HepG2 (cell line): ENCODE measurements at regions of chr4 and their contacts with region 1.

Region 1: DNA sequence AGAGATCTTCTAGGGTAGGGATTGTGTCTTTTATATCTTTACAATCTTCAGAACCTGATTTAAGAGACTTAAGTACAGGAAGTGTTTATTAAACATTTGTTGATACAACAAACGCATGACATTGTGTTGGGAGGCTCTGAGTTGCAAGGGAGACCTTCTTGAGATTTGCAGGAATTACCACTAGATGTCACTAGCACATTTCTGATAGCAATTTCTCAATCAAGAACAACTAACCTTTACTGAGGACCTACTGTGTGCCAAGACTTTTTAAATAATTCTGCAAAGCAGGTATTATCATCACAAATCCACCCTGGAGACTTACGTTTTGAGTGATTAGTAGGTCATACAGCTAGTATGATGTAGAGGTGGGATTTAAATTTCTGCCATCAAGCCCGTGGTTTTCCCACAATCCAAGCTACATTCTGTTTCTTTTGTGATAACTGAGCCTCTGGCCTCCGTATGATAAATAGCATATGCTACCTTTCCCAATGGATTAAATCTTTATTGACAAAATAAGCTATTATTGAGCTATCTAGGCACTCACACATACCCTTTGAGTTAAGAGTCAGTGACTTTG is 986.0 kb downstream of the CCSER1 start:
- DNase-seq: peak; percentile 7
- ATAC-seq: no peak; the same call in 2 of the 3 replicates
- H3K4me3 ChIP-seq: no peak overlapping the region
- H3K27ac ChIP-seq: no peak overlapping the region
- H3K4me1 ChIP-seq: no peaks in the 10 kb centered on the region
- H3K27me3 ChIP-seq: no peaks in the 10 kb centered on the region
- CTCF ChIP-seq: peak; percentile 69
- EP300 ChIP-seq: no peak
- POLR2A ChIP-seq: no peak
- RAD21 ChIP-seq: 0 out of 2 replicates have a peak, but pooled peaks have one; percentile 19

Region 2: DNA sequence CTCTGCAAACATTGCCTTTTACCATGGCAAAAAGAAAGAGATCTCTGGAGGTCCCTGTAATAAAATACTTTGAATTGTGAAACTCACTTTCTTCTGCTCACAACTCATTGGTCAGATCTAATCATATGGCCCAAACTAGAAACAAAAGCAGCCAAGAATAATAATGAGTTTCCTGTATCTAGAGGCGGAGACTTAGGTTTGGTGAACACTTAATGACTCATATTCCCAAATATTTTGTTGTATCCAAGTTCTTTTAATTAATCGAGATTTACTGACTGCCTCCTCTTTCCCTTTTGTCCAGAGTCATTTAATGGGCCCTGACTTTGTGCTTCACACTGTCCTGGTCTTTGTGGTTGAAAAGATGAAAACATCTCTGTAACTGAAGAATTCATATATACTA is 795.4 kb before region 1 on chr4:
- CTCF ChIA-PET with region 1: no interaction called
- POLR2A ChIA-PET with region 1: no interaction called
- in situ Hi-C with region 1: no loop called
- intact Hi-C with region 1: loop called (anchors 5 kb)
- DNase-seq: no peak
- ATAC-seq: no peak
- H3K4me3 ChIP-seq: no peak overlapping the region
- H3K27ac ChIP-seq: no peak overlapping the region
- H3K4me1 ChIP-seq: no peaks in the 10 kb centered on the region
- H3K27me3 ChIP-seq: no peaks in the 10 kb centered on the region; a peak in 1 of 5 replicates
- CTCF ChIP-seq: no peak
- EP300 ChIP-seq: no peak
- POLR2A ChIP-seq: no peak
- RAD21 ChIP-seq: no peak

Region 3: GRCh38 chr4:90419124-90419711 is 694.0 kb before region 1 on chr4:
- CTCF ChIA-PET with region 1: no interaction called
- POLR2A ChIA-PET with region 1: no interaction called
- in situ Hi-C with region 1: no loop called
- intact Hi-C with region 1: loop called (anchors 1 kb)
- DNase-seq: peak; percentile 16
- ATAC-seq: peak; percentile 71
- H3K4me3 ChIP-seq: no peak overlapping the region
- H3K27ac ChIP-seq: no peak overlapping the region
- H3K4me1 ChIP-seq: no peaks in the 10 kb centered on the region
- H3K27me3 ChIP-seq: no peaks in the 10 kb centered on the region
- CTCF ChIP-seq: peak; percentile 65
- EP300 ChIP-seq: no peak
- POLR2A ChIP-seq: no peak
- RAD21 ChIP-seq: no peak

Region 4: GRCh38 chr4:90780193-90780592 is 333.0 kb before region 1 on chr4:
- CTCF ChIA-PET with region 1: no interaction called
- POLR2A ChIA-PET with region 1: no interaction called
- in situ Hi-C with region 1: no loop called
- intact Hi-C with region 1: loop called (anchors 5 kb)
- DNase-seq: no peak
- ATAC-seq: no peak
- H3K4me3 ChIP-seq: no peak overlapping the region
- H3K27ac ChIP-seq: no peak overlapping the region
- H3K4me1 ChIP-seq: no peaks in the 10 kb centered on the region
- H3K27me3 ChIP-seq: no peaks in the 10 kb centered on the region
- CTCF ChIP-seq: no peak
- EP300 ChIP-seq: no peak
- POLR2A ChIP-seq: no peak
- RAD21 ChIP-seq: no peak

Region 5: DNA sequence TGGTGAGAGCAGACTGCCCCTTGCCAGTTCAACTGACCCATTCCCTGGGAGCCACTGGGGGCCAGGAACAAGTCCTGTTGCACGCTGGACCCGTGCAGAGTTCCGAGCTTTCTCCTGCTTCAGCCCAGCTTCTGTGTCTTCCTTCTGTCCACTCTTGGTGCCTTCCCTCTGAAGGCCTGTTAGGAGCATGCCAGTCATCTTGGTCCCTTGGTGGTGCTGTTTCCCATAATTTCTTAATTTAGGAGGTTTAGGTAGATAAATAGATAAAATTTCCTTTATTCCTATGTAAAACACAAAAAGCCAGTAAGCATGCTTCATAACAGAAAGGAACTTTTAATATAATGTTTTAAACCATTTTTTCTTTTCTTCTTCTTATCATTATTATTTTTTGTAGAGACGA is 313.3 kb before region 1 on chr4:
- CTCF ChIA-PET with region 1: no interaction called
- POLR2A ChIA-PET with region 1: no interaction called
- in situ Hi-C with region 1: no loop called
- intact Hi-C with region 1: loop called (anchors 1 kb)
- DNase-seq: no peak
- ATAC-seq: peak; percentile 47; the same call in 2 of the 3 replicates
- H3K4me3 ChIP-seq: no peak overlapping the region
- H3K27ac ChIP-seq: no peak overlapping the region
- H3K4me1 ChIP-seq: no peaks in the 10 kb centered on the region
- H3K27me3 ChIP-seq: no peaks in the 10 kb centered on the region; a peak in 1 of 5 replicates
- CTCF ChIP-seq: peak; percentile 36
- EP300 ChIP-seq: no peak
- POLR2A ChIP-seq: no peak
- RAD21 ChIP-seq: no peak

Region 6: DNA sequence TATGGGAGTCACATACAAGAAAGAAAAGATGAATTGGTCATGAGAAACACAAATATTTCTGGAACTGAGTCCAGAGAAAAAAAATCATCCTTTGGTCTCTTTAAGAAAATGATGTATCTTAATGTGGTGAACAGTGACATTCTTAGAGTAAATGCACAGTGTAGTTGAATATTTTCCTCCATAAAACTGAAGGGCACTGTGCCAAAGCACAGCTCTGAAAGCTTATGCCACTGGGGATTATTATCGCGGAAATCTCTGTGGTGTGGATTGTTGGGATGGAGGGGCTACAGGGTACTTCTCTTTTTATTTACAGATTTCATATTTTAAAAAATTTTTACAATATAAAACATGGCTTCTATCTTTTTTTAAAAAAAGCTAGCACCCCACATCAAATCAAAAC is 77.9 kb before region 1 on chr4:
- CTCF ChIA-PET with region 1: no interaction called
- POLR2A ChIA-PET with region 1: no interaction called
- in situ Hi-C with region 1: no loop called
- intact Hi-C with region 1: no loop called
- DNase-seq: no peak
- ATAC-seq: no peak
- H3K4me3 ChIP-seq: no peak overlapping the region
- H3K27ac ChIP-seq: no peak overlapping the region
- H3K4me1 ChIP-seq: no peaks in the 10 kb centered on the region
- H3K27me3 ChIP-seq: no peaks in the 10 kb centered on the region
- CTCF ChIP-seq: no peak
- EP300 ChIP-seq: no peak
- POLR2A ChIP-seq: no peak
- RAD21 ChIP-seq: no peak

Region 7: GRCh38 chr4:91092398-91093090 is 20.7 kb before region 1 on chr4:
- CTCF ChIA-PET with region 1: no interaction called
- POLR2A ChIA-PET with region 1: no interaction called
- in situ Hi-C with region 1: no loop called
- intact Hi-C with region 1: no loop called
- DNase-seq: no peak
- ATAC-seq: no peak
- H3K4me3 ChIP-seq: no peak overlapping the region
- H3K27ac ChIP-seq: no peak overlapping the region
- H3K4me1 ChIP-seq: no peaks in the 10 kb centered on the region
- H3K27me3 ChIP-seq: no peaks in the 10 kb centered on the region; a peak in 1 of 5 replicates
- CTCF ChIP-seq: no peak
- EP300 ChIP-seq: no peak
- POLR2A ChIP-seq: no peak
- RAD21 ChIP-seq: no peak

Region 8: DNA sequence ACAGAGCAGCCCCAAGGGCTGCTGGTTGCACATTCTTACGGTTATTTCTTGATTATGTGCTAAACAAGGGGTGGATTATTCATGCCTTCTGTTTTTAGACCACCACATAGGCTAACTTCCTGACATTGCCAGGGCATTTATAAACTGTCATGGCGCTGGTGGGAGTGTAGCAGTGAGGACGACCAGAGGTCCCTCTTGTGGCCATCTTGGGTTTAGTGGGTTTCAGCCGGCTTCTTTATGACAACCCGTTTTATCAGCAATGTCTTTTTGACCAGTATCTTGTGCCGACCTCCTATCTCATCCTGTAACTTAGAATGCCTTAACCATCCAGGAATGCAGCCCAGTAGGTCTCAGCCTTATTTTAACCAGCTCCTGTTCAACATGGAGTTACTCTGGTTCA is 978.1 kb after region 1 on chr4:
- CTCF ChIA-PET with region 1: no interaction called
- POLR2A ChIA-PET with region 1: no interaction called
- in situ Hi-C with region 1: no loop called
- intact Hi-C with region 1: loop called (anchors 5 kb)
- DNase-seq: peak; percentile 21
- ATAC-seq: peak; percentile 87
- H3K4me3 ChIP-seq: peak overlapping the region; percentile 12 to 41 (median 16); a peak in 4 of 6 replicates
- H3K27ac ChIP-seq: no peak overlapping the region
- H3K4me1 ChIP-seq: no peaks in the 10 kb centered on the region
- H3K27me3 ChIP-seq: 0 out of 5 replicates have a peak, but pooled peaks cover 0 to 1% of the 10 kb centered on the region in 2 experiments
- CTCF ChIP-seq: peak; percentile 32; the same call in 1 of the 2 replicates
- EP300 ChIP-seq: no peak
- POLR2A ChIP-seq: no peak
- RAD21 ChIP-seq: peak; percentile 40; the same call in 1 of the 2 replicates

Region 9: GRCh38 chr4:92387459-92388069 is 1274.3 kb after region 1 on chr4:
- CTCF ChIA-PET with region 1: interaction called, 4 read pairs
- POLR2A ChIA-PET with region 1: no interaction called
- in situ Hi-C with region 1: loop called (anchors 25 kb)
- intact Hi-C with region 1: no loop called
- DNase-seq: peak; percentile 30
- ATAC-seq: peak; percentile 80
- H3K4me3 ChIP-seq: no peak overlapping the region
- H3K27ac ChIP-seq: no peak overlapping the region
- H3K4me1 ChIP-seq: no peaks in the 10 kb centered on the region
- H3K27me3 ChIP-seq: no peaks in the 10 kb centered on the region
- CTCF ChIP-seq: peak; percentile 57
- EP300 ChIP-seq: no peak
- POLR2A ChIP-seq: no peak
- RAD21 ChIP-seq: no peak